ENCODE measurements at regions of chr15 and their contacts with region 1.

Region 1: DNA sequence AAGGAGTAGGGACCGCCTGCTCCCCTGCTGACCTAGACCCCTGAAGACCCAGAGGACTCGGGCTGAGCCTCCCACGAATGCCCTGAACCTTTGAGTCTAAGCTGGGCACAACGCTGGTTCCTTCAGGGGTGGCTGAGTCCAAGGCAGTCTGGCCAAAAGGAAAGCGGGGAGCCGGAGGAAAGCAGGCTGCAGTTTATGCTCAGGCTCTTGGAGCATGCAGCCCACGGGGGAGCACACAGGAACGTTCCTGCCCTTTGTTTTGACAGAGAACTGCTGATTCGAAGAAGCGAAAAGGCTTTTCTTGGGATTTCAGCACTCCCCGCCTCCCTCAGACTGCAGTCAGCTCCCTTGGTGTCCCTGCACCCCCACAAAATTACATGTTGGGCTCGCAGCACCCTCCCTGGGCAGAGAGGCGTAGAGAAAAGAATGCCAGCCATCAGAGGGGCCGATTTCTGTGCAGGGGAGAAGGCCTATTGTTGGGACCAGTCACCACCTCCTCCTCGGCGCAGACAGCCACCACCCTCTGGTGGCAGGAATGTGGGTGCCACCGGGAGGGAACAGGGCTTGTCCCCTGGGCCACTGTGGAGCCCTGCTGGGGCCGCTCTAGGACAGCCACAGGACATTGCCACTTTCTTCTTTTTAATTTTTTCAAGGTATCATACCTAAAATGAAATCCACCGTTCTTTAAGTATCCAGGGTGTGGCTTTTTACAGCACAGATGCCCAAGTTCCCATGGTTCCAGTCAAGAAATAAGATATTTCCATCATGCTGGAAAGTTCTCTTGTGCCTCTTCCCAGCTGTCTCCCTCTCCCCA is 72.2 kb downstream of the SMAD6 start:
- DNase-seq: peak; percentile 89 to 98
- ATAC-seq: peak; percentile 86 to 89
- H3K4me3 ChIP-seq: no peak overlapping the region
- H3K27ac ChIP-seq: peak overlapping the region; percentile 93 to 94
- H3K4me1 ChIP-seq: peaks cover 96% of the 10 kb centered on the region
- CTCF ChIP-seq: peak; percentile 100
- EP300 ChIP-seq: no peak
- POLR2A ChIP-seq: no peak
- RAD21 ChIP-seq: peak; percentile 99 to 100

Region 2: GRCh38 chr15:66472176-66472999 is 301.8 kb before region 1 on chr15:
- CTCF ChIA-PET with region 1: no interaction called
- POLR2A ChIA-PET with region 1: no interaction called
- DNase-seq: no peak
- ATAC-seq: peak in 1 of 2 experiments; percentile 29; a peak in 3 of 6 replicates
- H3K4me3 ChIP-seq: no peak overlapping the region
- H3K27ac ChIP-seq: peak overlapping the region in 1 of 2 experiments; percentile 34; a peak in 2 of 6 replicates
- H3K4me1 ChIP-seq: peaks cover 14% of the 10 kb centered on the region
- CTCF ChIP-seq: no peak
- EP300 ChIP-seq: no peak
- POLR2A ChIP-seq: no peak
- RAD21 ChIP-seq: no peak

Region 3: DNA sequence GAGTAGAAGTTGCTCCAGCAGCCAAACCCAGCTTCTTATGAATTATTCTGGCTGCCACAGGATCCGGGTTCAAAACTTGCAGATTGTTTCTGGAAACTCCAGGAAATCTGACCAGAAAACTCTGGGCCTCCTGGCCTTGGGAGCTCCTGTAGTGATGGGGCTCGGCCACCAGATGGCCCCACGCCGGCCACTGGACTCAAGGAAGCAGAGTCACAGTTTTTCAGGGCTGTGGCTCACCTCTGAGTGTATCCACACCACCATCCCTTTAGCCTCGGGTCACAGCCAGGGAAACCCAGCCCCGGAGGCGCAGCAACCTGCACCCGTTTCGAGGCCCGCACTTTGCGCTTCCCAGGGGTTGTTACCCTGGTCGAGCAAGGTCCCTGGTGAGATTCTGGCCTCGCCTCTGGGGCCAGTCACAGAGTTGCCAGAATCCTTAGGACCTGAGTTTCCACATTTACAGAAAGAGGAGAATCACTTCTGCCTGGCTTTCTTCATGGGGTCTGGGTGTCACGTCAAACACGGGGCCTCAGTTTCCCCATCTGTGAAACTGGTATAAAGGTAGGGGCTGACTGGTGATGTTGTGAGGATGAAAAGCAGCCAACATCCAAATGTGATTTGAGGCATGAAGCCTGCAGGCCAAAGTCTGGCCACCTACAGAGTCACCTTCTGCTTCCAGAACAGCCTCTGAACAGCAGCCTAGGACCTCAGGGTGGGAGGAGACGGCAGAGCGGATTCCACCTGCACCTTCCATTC is 154.9 kb before region 1 on chr15:
- CTCF ChIA-PET with region 1: interaction called, 53 read pairs
- POLR2A ChIA-PET with region 1: no interaction called
- DNase-seq: peak; percentile 83 to 92
- ATAC-seq: peak; percentile 87 to 95
- H3K4me3 ChIP-seq: no peak overlapping the region
- H3K27ac ChIP-seq: peak overlapping the region; percentile 69 to 81
- H3K4me1 ChIP-seq: peaks cover 18% of the 10 kb centered on the region
- CTCF ChIP-seq: peak; percentile 97
- EP300 ChIP-seq: no peak
- POLR2A ChIP-seq: no peak
- RAD21 ChIP-seq: peak; percentile 85 to 86

Region 4: DNA sequence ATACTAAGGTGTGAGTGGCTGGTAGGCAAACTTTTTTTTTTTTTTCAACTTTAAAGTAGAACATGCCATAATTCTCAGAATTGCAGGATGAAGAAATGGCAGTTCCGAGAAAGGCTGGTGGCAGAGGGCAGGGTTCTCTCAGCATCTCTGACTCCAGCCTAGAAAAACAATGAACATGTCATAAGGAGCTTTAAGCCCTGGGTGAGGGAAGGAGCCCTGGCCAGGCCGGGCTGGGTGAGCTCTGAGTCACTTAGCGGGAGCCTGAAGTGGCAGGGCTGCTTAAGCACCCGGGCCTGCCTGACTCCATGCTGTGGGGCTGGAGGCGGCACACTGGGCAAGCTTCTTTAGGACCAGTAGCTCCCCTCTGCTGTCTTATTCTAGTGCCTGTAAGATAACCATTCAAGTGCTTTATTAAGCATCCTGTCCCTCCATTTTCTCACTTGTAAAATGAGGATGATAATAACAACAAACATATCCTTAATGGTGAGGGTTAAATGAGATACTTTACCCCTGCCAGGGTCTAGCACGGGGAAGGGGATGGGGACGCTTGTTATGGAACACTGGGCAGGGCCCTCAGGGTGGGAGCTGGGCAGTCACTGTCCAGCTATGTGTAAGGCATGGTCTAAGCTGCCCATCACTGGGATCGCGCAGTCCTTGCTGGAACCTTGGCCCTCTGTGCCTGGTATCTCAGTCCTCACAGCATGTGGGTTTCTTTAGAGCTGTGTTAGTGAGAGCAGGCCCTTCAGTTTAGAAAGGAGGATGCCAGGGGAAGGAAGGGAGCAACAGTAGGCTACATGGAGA is 53.8 kb before region 1 on chr15:
- CTCF ChIA-PET with region 1: interaction called, 779 read pairs
- POLR2A ChIA-PET with region 1: no interaction called
- DNase-seq: peak in 1 of 2 experiments; percentile 44
- ATAC-seq: peak; percentile 51 to 59; a peak in 5 of 6 replicates
- H3K4me3 ChIP-seq: no peak overlapping the region
- H3K27ac ChIP-seq: peak overlapping the region in 1 of 2 experiments; percentile 46; a peak in 3 of 6 replicates
- H3K4me1 ChIP-seq: peaks cover 91% of the 10 kb centered on the region
- CTCF ChIP-seq: no peak
- EP300 ChIP-seq: no peak
- POLR2A ChIP-seq: no peak
- RAD21 ChIP-seq: no peak

Region 5: GRCh38 chr15:66751541-66751952 is 22.7 kb before region 1 on chr15:
- CTCF ChIA-PET with region 1: interaction called, 143 read pairs
- POLR2A ChIA-PET with region 1: interaction called, 3 read pairs
- DNase-seq: peak in 1 of 2 experiments; percentile 77
- ATAC-seq: peak; percentile 16 to 32; a peak in 5 of 6 replicates
- H3K4me3 ChIP-seq: no peak overlapping the region
- H3K27ac ChIP-seq: peak overlapping the region; percentile 71 to 87
- H3K4me1 ChIP-seq: peaks cover 76% of the 10 kb centered on the region
- CTCF ChIP-seq: no peak
- EP300 ChIP-seq: peak in 1 of 2 experiments; percentile 24; a peak in 1 of 5 replicates
- POLR2A ChIP-seq: no peak
- RAD21 ChIP-seq: no peak

Region 6: DNA sequence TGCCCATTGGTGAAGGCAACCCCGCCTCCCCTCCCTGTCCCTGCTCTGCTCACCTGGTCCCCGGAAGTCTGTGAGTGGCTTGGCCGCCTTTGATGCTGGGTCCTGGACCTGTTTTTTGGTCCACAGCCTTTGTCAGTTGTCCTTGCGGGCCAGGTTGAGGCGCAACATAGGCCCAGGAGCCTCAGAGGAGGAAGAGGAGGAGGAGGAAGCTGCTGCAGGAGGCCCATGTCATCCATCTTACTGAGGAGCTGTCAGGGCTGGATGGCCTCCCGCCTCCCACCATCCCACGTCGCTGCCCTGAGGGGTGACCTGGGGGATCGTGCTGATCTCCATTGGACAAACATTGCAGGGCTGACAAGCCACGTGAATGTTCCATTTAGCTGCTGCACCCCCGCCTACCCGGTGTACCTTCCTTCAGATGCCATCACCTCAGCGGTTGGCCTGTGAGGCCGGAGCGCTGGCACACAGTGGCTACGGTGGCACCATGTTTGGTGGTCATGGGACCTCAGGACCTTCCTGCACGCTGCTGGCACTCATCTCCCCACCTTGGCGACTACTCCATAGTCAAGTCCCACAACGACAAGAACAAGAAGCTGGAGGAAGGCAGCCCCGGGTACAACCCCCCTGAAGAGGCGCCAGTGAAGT is 34.1 kb after region 1 on chr15:
- CTCF ChIA-PET with region 1: interaction called, 18 read pairs
- POLR2A ChIA-PET with region 1: no interaction called
- DNase-seq: no peak
- ATAC-seq: no peak
- H3K4me3 ChIP-seq: no peak overlapping the region
- H3K27ac ChIP-seq: no peak overlapping the region
- H3K4me1 ChIP-seq: peaks cover 12% of the 10 kb centered on the region
- CTCF ChIP-seq: no peak
- EP300 ChIP-seq: no peak
- POLR2A ChIP-seq: no peak
- RAD21 ChIP-seq: no peak

Measured in A549 (cell line).